Activated B cell treated with CpG ODN at 0.5 μM for 24 hours (primary cell): ENCODE measurements at regions of chr5 and their contacts with region 1.

Region 1: GRCh38 chr5:157858527-157859226 is at the start of gene CLINT1:
- DNase-seq: peak; percentile 82
- ATAC-seq: peak; percentile 82
- H3K4me3 Mint-ChIP-seq: peak within 1 kb of the TSS; percentile 97
- H3K27ac Mint-ChIP-seq: peak within 1 kb of the TSS; percentile 93
- H3K4me1 Mint-ChIP-seq: peaks cover 76% of the 10 kb centered on the region
- H3K27me3 Mint-ChIP-seq: no peaks in the 10 kb centered on the region
- CTCF ChIP-seq: no peak
- total RNA-seq, gene CLINT1: 92.4 and 105 TPM in 2 replicates

Region 2: GRCh38 chr5:157842787-157843186 is 15.9 kb before region 1 on chr5:
- CTCF ChIA-PET with region 1: interaction called, 3 read pairs
- POLR2A ChIA-PET with region 1: no interaction called
- intact Hi-C with region 1: loop called (anchors 2 kb)
- DNase-seq: no peak
- ATAC-seq: no peak
- H3K4me3 Mint-ChIP-seq: no peak overlapping the region
- H3K27ac Mint-ChIP-seq: no peak overlapping the region
- H3K4me1 Mint-ChIP-seq: peaks cover 16% of the 10 kb centered on the region
- H3K27me3 Mint-ChIP-seq: no peaks in the 10 kb centered on the region
- CTCF ChIP-seq: no peak

Region 3: DNA sequence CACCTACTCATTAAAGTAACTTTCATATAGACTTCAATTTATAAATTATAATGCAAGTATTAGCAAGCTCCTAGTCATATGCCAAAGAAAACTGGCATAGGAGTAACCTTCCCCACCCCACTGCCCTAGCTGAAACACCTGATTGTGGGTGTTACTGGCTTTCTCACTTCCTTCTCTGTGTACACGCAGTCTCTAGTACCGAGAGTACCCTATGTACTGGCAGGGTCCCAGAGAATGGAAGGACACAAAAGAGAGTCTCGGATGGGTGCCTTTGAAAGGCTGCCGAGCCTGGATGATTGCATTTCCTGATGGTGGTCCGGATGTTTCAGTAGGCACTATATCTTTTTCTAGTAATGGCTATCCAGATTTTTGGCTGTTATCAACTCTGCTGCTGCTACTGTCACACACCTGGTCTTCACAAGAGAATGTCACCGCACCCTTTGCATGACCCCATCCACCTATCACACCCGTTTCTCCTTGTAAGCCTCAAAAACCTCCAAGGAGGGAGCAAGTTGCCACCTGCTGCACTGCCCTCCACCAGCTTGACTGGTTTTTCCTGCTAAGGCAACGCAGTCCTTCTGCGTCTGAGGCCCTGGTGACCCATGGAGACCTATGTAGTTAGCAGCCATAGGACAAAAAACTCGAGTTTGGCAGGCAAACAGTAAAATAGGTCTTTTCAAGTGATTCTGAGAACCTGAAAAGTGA is 54.1 kb after region 1 on chr5:
- CTCF ChIA-PET with region 1: interaction called, 3 read pairs
- POLR2A ChIA-PET with region 1: interaction called, 15 read pairs
- intact Hi-C with region 1: no loop called
- DNase-seq: peak; percentile 16
- ATAC-seq: peak; percentile 97
- H3K4me3 Mint-ChIP-seq: peak overlapping the region; percentile 33
- H3K27ac Mint-ChIP-seq: peak overlapping the region; percentile 32
- H3K4me1 Mint-ChIP-seq: peaks cover 30% of the 10 kb centered on the region
- H3K27me3 Mint-ChIP-seq: no peaks in the 10 kb centered on the region
- CTCF ChIP-seq: no peak

Region 4: DNA sequence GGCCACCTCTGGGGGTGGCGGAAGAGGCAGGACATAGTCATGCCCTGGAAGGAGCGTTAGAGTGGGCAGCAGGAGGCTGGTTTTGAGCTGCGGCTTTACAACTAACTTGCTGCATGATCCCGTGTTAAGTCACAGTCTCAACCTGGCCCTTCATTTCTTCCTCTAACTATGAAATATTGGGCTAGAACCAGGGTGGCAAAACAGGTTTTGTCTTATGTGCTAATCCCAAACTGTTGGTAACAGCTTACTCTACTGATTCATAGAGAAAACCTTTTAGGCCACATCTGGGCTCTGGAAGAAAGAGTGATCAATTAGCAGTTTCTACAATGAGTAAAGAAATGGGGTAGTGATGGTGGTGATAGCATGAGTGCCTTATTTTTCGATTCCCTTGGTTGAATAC is 74.3 kb after region 1 on chr5:
- CTCF ChIA-PET with region 1: no interaction called
- POLR2A ChIA-PET with region 1: interaction called, 10 read pairs
- intact Hi-C with region 1: no loop called
- DNase-seq: no peak
- ATAC-seq: no peak
- H3K4me3 Mint-ChIP-seq: no peak overlapping the region
- H3K27ac Mint-ChIP-seq: no peak overlapping the region
- H3K4me1 Mint-ChIP-seq: no peaks in the 10 kb centered on the region
- H3K27me3 Mint-ChIP-seq: no peaks in the 10 kb centered on the region
- CTCF ChIP-seq: no peak